ENCODE measurements at regions of chr6 and their contacts with region 1.

Region 1: GRCh38 chr6:38034274-38034914 is 214.9 kb downstream of the ZFAND3 start:
- DNase-seq: no peak
- H3K4me3 ChIP-seq: no peak overlapping the region; a peak in 1 of 4 replicates
- H3K27ac ChIP-seq: peak overlapping the region in 1 of 2 experiments; percentile 16; a peak in 2 of 4 replicates
- H3K4me1 ChIP-seq: peaks cover 4 to 7% of the 10 kb centered on the region in 2 experiments; a peak in 3 of 4 replicates
- H3K27me3 ChIP-seq: no peaks in the 10 kb centered on the region
- CTCF ChIP-seq: peak; percentile 76
- EP300 ChIP-seq: no peak
- RAD21 ChIP-seq: peak; percentile 63

Region 2: DNA sequence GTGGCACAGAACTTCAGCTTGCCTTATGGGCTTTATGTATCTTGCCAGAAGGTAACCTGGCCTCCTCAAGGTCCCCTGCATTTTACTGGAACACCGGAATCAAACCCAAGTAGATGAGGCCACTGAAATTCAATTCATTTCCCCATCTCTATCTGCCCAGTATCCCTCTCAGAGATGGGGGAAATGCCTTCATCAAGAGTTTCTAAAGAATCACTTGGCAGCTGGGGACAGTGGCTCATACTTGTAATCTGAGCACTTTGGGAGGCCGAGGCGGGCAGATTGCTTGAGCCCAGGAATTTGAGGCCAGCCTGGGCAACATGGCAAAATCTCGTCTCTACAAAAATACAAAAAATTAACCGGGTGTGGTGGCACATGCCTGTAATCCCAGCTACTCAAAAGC is 349.6 kb before region 1 on chr6:
- CTCF ChIA-PET with region 1: no interaction called
- POLR2A ChIA-PET with region 1: no interaction called
- DNase-seq: no peak
- H3K4me3 ChIP-seq: no peak overlapping the region
- H3K27ac ChIP-seq: no peak overlapping the region
- H3K4me1 ChIP-seq: no peaks in the 10 kb centered on the region; a peak in 1 of 4 replicates
- H3K27me3 ChIP-seq: no peaks in the 10 kb centered on the region
- CTCF ChIP-seq: no peak
- EP300 ChIP-seq: no peak
- RAD21 ChIP-seq: no peak

Region 3: GRCh38 chr6:37965964-37966676 is 68.3 kb before region 1 on chr6:
- CTCF ChIA-PET with region 1: no interaction called
- POLR2A ChIA-PET with region 1: no interaction called
- DNase-seq: no peak
- H3K4me3 ChIP-seq: no peak overlapping the region
- H3K27ac ChIP-seq: no peak overlapping the region
- H3K4me1 ChIP-seq: no peaks in the 10 kb centered on the region; a peak in 1 of 4 replicates
- H3K27me3 ChIP-seq: no peaks in the 10 kb centered on the region
- CTCF ChIP-seq: no peak
- EP300 ChIP-seq: no peak
- RAD21 ChIP-seq: no peak

Region 4: GRCh38 chr6:37994238-37994637 is 40.2 kb before region 1 on chr6:
- CTCF ChIA-PET with region 1: no interaction called
- POLR2A ChIA-PET with region 1: no interaction called
- DNase-seq: no peak
- H3K4me3 ChIP-seq: no peak overlapping the region
- H3K27ac ChIP-seq: peak overlapping the region in 1 of 2 experiments; percentile 12; a peak in 1 of 4 replicates
- H3K4me1 ChIP-seq: peaks cover 5 to 20% of the 10 kb centered on the region in 2 experiments
- H3K27me3 ChIP-seq: no peaks in the 10 kb centered on the region
- CTCF ChIP-seq: no peak
- EP300 ChIP-seq: no peak
- RAD21 ChIP-seq: no peak

Region 5: GRCh38 chr6:38022688-38023087 is 11.7 kb before region 1 on chr6:
- CTCF ChIA-PET with region 1: interaction called, 12 read pairs
- POLR2A ChIA-PET with region 1: no interaction called
- DNase-seq: no peak
- H3K4me3 ChIP-seq: no peak overlapping the region
- H3K27ac ChIP-seq: no peak overlapping the region
- H3K4me1 ChIP-seq: peaks cover 5 to 12% of the 10 kb centered on the region in 2 experiments; a peak in 3 of 4 replicates
- H3K27me3 ChIP-seq: no peaks in the 10 kb centered on the region
- CTCF ChIP-seq: no peak
- EP300 ChIP-seq: no peak
- RAD21 ChIP-seq: no peak

Region 6: GRCh38 chr6:38045701-38046305 is 11.4 kb after region 1 on chr6:
- CTCF ChIA-PET with region 1: interaction called, 32 read pairs
- POLR2A ChIA-PET with region 1: no interaction called
- DNase-seq: no peak
- H3K4me3 ChIP-seq: no peak overlapping the region
- H3K27ac ChIP-seq: no peak overlapping the region
- H3K4me1 ChIP-seq: peaks cover 0 to 3% of the 10 kb centered on the region in 2 experiments; a peak in 2 of 4 replicates
- H3K27me3 ChIP-seq: no peaks in the 10 kb centered on the region
- CTCF ChIP-seq: no peak
- EP300 ChIP-seq: no peak
- RAD21 ChIP-seq: no peak

Region 7: DNA sequence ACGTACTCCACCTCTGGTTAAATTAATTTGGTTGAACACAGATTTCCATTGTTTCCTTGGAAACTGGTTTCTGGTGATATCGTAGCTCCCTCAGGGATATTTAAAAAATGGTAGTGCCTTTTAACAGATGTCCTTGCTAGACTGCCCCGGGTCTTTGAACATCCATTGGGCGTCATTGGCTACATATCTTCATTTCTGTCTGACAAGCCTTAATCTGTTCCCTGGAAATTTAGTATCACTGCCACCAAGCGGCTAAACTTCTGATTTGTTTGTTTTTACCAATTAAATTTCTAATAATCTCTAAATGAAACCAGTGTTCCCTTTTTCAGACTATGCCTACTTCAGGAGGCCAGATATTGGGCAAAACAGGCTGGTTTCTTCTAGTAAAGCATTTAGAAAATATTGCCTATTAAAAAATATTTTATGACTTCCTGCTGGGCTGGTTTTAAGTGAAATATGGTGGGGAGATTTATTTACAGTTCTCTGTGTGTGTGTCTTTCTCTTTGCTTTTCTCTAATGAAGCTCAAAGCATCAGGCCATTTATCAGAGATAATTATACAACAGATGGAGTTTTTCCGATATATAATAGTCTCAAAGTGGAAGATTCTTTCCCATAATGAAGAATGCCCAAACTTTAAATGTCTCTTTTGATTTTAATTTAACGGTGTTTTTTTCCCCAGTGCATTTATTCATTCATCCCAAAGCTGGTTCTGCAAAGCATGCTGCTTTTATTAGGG is 34.6 kb after region 1 on chr6:
- CTCF ChIA-PET with region 1: interaction called, 11 read pairs
- POLR2A ChIA-PET with region 1: no interaction called
- DNase-seq: peak; percentile 61
- H3K4me3 ChIP-seq: no peak overlapping the region
- H3K27ac ChIP-seq: peak overlapping the region; percentile 1 to 93; a peak in 3 of 4 replicates
- H3K4me1 ChIP-seq: peaks cover 11 to 29% of the 10 kb centered on the region in 2 experiments; a peak in 3 of 4 replicates
- H3K27me3 ChIP-seq: no peaks in the 10 kb centered on the region
- CTCF ChIP-seq: peak; percentile 40
- EP300 ChIP-seq: peak in 1 of 2 experiments; percentile 83; a peak in 2 of 4 replicates
- RAD21 ChIP-seq: peak; percentile 69

Region 8: GRCh38 chr6:38234934-38235682 is 200.7 kb after region 1 on chr6:
- CTCF ChIA-PET with region 1: no interaction called
- POLR2A ChIA-PET with region 1: no interaction called
- DNase-seq: no peak
- H3K4me3 ChIP-seq: no peak overlapping the region
- H3K27ac ChIP-seq: no peak overlapping the region
- H3K4me1 ChIP-seq: peaks cover 0 to 35% of the 10 kb centered on the region in 2 experiments; a peak in 3 of 4 replicates
- H3K27me3 ChIP-seq: no peaks in the 10 kb centered on the region
- CTCF ChIP-seq: no peak
- EP300 ChIP-seq: no peak
- RAD21 ChIP-seq: no peak

Measured in SK-N-SH (cell line).